MCF 10A (cell line): ENCODE measurements at regions of chr17 and their contacts with region 1.

Region 1: DNA sequence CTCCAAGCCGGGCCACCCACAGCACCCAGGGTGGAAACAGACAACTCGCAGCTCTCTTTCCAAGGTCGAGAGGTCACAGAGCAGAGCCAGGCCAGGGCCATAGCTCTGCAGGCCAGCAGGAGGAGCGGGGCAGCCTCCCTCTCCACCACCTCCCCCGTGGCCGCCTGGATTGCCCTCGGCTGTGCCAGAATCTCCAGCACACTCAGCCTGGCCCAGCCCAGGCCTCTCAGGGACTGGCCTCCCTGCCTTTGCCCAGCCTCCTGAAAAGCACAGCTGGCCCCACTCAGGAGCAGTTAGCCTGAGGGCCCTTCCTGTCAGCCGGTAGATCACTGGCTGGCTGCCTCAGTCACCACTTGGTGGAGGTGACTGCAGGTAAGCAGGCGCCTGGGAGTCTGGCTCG is 85.8 kb upstream of the SEC14L1 start:
- DNase-seq: no peak
- H3K4me3 Mint-ChIP-seq: no peak overlapping the region
- H3K27ac Mint-ChIP-seq: no peak overlapping the region
- H3K4me1 Mint-ChIP-seq: peaks cover 6% of the 10 kb centered on the region
- H3K27me3 Mint-ChIP-seq: peaks cover 20% of the 10 kb centered on the region
- CTCF ChIP-seq: no peak

Region 2: GRCh38 chr17:76793775-76794174 is 261.2 kb before region 1 on chr17:
- CTCF ChIA-PET with region 1: no interaction called
- POLR2A ChIA-PET with region 1: no interaction called
- intact Hi-C with region 1: loop called (anchors 1 kb)
- DNase-seq: peak; percentile 60
- H3K4me3 Mint-ChIP-seq: no peak overlapping the region
- H3K27ac Mint-ChIP-seq: no peak overlapping the region
- H3K4me1 Mint-ChIP-seq: no peaks in the 10 kb centered on the region
- H3K27me3 Mint-ChIP-seq: no peaks in the 10 kb centered on the region
- CTCF ChIP-seq: peak; percentile 38

Region 3: GRCh38 chr17:76868176-76868668 is 186.7 kb before region 1 on chr17 and contains the start of gene MGAT5B:
- CTCF ChIA-PET with region 1: interaction called, 51 read pairs
- POLR2A ChIA-PET with region 1: interaction called, 12 read pairs
- intact Hi-C with region 1: loop called (anchors 1 kb)
- DNase-seq: peak; percentile 71
- H3K4me3 Mint-ChIP-seq: peak within 1 kb of the TSS; percentile 58
- H3K27ac Mint-ChIP-seq: no peak within 1 kb of the TSS
- H3K4me1 Mint-ChIP-seq: peaks cover 25% of the 10 kb centered on the region
- H3K27me3 Mint-ChIP-seq: no peaks in the 10 kb centered on the region
- CTCF ChIP-seq: peak; percentile 84
- total RNA-seq, gene MGAT5B: 1.3 and 1.7 TPM in 2 replicates

Region 4: GRCh38 chr17:77011173-77012011 is 43.5 kb before region 1 on chr17:
- CTCF ChIA-PET with region 1: interaction called, 25 read pairs
- POLR2A ChIA-PET with region 1: no interaction called
- intact Hi-C with region 1: loop called (anchors 1 kb)
- DNase-seq: peak; percentile 54
- H3K4me3 Mint-ChIP-seq: no peak overlapping the region
- H3K27ac Mint-ChIP-seq: no peak overlapping the region
- H3K4me1 Mint-ChIP-seq: no peaks in the 10 kb centered on the region
- H3K27me3 Mint-ChIP-seq: peaks cover 56% of the 10 kb centered on the region
- CTCF ChIP-seq: peak; percentile 51

Region 5: DNA sequence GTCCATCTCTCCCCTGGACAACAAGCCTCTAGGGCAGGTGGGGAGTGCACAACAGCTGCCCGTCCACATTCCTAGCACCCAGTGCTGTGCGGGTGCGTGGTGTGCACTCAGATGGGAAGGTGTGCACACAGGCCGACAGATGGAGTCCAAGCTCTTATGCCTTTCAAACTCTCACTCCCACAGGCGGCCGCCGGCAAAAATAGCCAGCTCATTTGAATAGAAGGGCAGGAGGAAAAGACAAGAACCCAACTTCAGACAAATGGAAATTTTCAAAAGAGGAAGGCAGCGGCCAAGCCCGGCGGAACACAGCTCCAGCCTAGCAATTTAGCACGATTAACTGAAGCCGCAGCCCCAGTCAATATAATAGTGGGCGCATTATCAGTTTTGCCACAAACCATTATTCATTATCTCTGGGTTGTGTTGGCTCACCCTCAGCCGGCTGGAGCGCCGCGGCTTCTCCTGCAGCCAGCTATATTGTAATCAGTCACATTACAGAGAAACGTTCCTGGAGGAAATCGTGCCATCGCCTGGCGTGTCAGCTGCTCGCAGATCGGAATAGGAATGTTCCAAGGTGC is 18.0 kb before region 1 on chr17:
- CTCF ChIA-PET with region 1: interaction called, 16 read pairs
- POLR2A ChIA-PET with region 1: interaction called, 6 read pairs
- intact Hi-C with region 1: no loop called
- DNase-seq: no peak
- H3K4me3 Mint-ChIP-seq: no peak overlapping the region
- H3K27ac Mint-ChIP-seq: no peak overlapping the region
- H3K4me1 Mint-ChIP-seq: no peaks in the 10 kb centered on the region
- H3K27me3 Mint-ChIP-seq: peaks cover 27% of the 10 kb centered on the region
- CTCF ChIP-seq: no peak

Region 6: GRCh38 chr17:77227461-77228237 is 172.7 kb after region 1 on chr17:
- CTCF ChIA-PET with region 1: no interaction called
- POLR2A ChIA-PET with region 1: no interaction called
- intact Hi-C with region 1: no loop called
- DNase-seq: no peak
- H3K4me3 Mint-ChIP-seq: no peak overlapping the region
- H3K27ac Mint-ChIP-seq: no peak overlapping the region
- H3K4me1 Mint-ChIP-seq: no peaks in the 10 kb centered on the region
- H3K27me3 Mint-ChIP-seq: no peaks in the 10 kb centered on the region
- CTCF ChIP-seq: no peak